ENCODE measurements at regions of chr1 and their contacts with region 1.

Region 1: DNA sequence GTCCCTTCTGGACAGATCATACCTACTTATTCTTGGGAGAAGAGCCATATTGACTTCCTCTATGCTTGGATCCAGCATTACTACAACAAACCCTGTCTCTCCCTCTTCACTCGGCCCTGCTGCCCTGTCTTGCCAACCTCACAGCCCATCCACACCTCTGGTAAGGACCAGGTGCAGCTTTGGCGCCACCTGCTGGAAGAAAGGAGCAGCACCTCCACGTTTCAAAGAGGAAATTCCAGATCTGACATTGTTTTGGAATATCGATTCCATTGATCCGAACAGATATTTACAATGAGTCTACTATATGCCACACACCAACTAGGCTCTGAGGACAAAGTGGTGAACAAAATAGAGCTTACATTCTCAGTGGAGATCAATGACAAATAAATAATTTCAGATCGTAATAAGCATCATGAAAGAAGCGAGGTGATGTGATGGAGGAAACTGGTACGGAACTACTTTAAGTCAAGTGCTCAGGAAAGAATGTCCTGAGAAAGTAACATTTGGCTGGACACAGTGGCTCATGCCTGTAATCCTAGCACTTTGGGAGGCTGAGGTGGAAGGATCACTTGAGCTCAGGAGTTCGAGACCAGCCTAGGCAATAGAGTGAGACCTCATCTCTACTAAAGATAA is 18.7 kb downstream of the MFSD2A start:
- DNase-seq: peak; percentile 86
- H3K4me3 ChIP-seq: peak overlapping the region in 1 of 2 experiments; percentile 35; a peak in 1 of 4 replicates
- H3K27ac ChIP-seq: no peak overlapping the region
- H3K4me1 ChIP-seq: no peaks in the 10 kb centered on the region; a peak in 1 of 4 replicates
- H3K27me3 ChIP-seq: no peaks in the 10 kb centered on the region
- CTCF ChIP-seq: peak; percentile 98
- EP300 ChIP-seq: no peak
- RAD21 ChIP-seq: peak; percentile 99

Region 2: DNA sequence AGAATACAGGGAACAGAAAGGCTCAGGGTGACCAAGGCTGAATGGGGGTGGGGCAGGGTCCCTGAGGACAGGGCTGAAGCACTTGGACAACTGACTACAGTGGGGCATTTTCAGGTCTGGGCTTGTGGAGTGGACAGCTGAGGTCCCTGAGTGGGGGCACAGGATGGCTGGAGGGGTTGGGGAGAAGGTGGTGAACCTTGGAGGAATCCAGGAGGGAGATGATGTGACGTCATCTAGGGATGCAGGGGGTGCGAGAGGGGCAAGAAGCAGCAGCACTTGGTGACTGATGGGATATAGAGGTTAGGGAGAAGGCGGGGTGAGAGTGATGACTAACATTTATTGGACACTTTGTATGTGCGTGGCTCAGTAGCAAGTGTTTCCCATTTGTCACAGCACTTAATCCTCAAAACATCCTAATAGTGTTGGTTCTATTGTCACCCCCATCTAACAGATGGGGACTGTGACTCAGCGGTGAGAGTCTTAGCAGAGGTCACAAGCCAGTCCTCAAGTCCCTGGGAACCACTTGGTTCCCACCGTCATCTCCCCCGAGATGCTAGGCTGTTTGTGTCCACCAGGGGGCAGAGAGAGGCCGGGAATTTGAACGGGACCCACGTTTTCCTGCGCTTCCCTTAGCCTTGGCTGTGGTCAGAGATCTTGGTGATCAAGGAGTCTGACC is 157.1 kb before region 1 on chr1:
- CTCF ChIA-PET with region 1: interaction called, 88 read pairs
- POLR2A ChIA-PET with region 1: no interaction called
- DNase-seq: peak; percentile 86
- H3K4me3 ChIP-seq: no peak overlapping the region
- H3K27ac ChIP-seq: no peak overlapping the region
- H3K4me1 ChIP-seq: no peaks in the 10 kb centered on the region
- H3K27me3 ChIP-seq: peaks cover 5% of the 10 kb centered on the region; the same call in 1 of the 2 replicates
- CTCF ChIP-seq: peak; percentile 94
- EP300 ChIP-seq: no peak
- RAD21 ChIP-seq: peak; percentile 83

Region 3: DNA sequence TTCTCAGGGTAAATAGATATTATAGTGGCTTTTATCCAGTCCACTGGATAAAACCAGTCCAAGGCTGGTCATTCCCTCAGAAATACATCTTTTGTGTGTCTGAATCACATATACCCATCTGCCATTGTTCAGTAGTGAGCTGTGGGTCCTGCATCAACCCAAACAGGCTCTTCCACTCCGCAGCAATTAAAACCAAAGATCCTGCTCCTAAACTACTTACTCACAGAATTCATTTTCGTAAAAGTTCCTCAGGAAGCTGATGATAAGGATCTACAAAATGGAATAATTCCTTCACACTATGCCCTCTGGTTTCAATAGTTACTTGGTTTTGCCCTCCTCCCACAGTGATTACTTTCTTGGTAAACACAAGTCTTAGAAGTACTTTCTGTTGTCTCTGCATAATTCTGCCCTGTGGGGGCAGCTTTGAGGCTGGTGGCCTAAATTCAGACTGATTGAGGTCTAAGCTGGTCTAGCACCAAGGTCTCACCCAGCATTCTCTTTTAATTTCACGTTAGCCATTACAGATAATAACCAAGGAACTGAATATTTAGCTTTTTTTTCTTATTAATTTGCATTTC is 23.7 kb before region 1 on chr1:
- CTCF ChIA-PET with region 1: interaction called, 37 read pairs
- POLR2A ChIA-PET with region 1: no interaction called
- DNase-seq: no peak
- H3K4me3 ChIP-seq: no peak overlapping the region
- H3K27ac ChIP-seq: no peak overlapping the region
- H3K4me1 ChIP-seq: peaks cover 0 to 11% of the 10 kb centered on the region in 2 experiments; a peak in 1 of 4 replicates
- H3K27me3 ChIP-seq: no peaks in the 10 kb centered on the region
- CTCF ChIP-seq: no peak
- EP300 ChIP-seq: no peak
- RAD21 ChIP-seq: no peak

Region 4: GRCh38 chr1:39960431-39960958 is 13.1 kb before region 1 on chr1:
- CTCF ChIA-PET with region 1: interaction called, 37 read pairs
- POLR2A ChIA-PET with region 1: no interaction called
- DNase-seq: peak; percentile 55
- H3K4me3 ChIP-seq: no peak overlapping the region
- H3K27ac ChIP-seq: no peak overlapping the region
- H3K4me1 ChIP-seq: peaks cover 0 to 12% of the 10 kb centered on the region in 2 experiments; a peak in 1 of 4 replicates
- H3K27me3 ChIP-seq: no peaks in the 10 kb centered on the region
- CTCF ChIP-seq: no peak
- EP300 ChIP-seq: no peak
- RAD21 ChIP-seq: no peak

Region 5: GRCh38 chr1:40032240-40032891 is 58.7 kb after region 1 on chr1:
- CTCF ChIA-PET with region 1: interaction called, 24 read pairs
- POLR2A ChIA-PET with region 1: no interaction called
- DNase-seq: peak; percentile 54
- H3K4me3 ChIP-seq: no peak overlapping the region
- H3K27ac ChIP-seq: no peak overlapping the region
- H3K4me1 ChIP-seq: peaks cover 15 to 17% of the 10 kb centered on the region in 2 experiments
- H3K27me3 ChIP-seq: no peaks in the 10 kb centered on the region
- CTCF ChIP-seq: peak; percentile 77
- EP300 ChIP-seq: no peak
- RAD21 ChIP-seq: peak; percentile 72